Dendritic cell treated with granulocyte-macrophage colony-stimulating factor and Interleukin-4, amounts not matched to agents 40 ng/mL and 50 ng/mL, for 4 days (primary cell): ENCODE measurements at regions of chr2 and their contacts with region 1.

Region 1: DNA sequence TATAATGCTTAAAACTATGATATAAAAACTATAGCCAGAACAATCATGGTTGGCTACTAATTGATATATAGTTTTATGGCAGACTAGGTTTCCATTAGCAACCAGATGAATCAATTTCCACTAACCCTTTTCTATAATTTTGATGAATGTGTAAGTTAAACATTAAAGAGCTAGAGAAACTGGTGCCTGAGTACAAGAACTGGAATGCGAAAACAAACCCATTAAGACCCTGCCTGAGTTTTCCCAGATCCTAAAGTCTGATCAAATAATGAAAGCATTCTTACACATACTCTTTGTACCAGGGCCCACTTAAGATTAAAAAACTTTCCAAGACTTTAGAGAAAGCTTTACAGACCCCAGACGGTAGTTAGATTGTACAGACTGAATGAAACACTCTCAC is 21.3 kb downstream of the MRPL19 start:
- H3K4me3 Mint-ChIP-seq: no peak overlapping the region
- H3K27ac Mint-ChIP-seq: no peak overlapping the region
- H3K4me1 Mint-ChIP-seq: no peaks in the 10 kb centered on the region
- H3K27me3 Mint-ChIP-seq: no peaks in the 10 kb centered on the region

Region 2: DNA sequence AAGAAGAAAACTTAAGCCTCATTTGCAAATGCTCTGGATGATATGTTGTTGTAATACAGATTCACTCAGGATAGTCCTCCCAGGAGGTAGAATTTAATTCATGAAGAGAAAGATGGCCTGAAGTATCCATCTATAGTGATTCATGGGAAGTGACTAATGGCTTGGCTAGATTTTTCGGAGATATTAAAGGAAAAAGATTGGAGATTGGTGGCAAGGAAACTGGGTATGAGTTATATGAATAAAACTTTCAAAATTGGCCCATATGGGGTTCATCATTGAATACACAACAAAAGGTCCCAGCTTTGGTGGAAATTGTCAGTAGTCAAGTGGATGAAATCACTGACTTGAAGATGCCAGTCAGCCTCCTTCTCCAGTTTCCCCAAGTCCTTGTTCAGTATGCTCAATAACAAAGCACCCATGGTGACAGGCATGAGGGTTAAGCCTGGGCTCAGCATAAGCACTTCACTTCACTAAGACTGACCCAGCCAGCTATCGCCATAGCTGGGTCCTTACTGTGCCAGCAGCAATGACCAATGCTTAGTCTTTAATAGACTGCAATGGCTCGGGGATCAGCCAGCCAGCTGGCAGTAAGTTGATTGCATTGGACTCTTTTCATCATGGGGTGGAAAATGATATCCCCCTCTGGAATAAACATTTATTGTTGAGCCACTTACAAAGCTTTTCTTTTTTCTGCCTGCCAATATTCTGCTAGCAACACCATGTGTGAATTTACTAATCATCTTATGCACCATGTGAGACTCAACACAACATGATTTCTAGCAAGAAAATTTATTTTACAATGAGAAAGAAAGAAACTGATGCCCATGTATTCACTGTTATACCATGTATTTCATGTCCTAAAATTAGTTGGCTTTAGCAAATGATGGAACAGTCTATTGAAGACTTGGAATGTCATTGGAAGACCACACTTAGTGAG is 292.0 kb before region 1 on chr2:
- intact Hi-C with region 1: no loop called
- H3K4me3 Mint-ChIP-seq: no peak overlapping the region
- H3K27ac Mint-ChIP-seq: no peak overlapping the region
- H3K4me1 Mint-ChIP-seq: no peaks in the 10 kb centered on the region
- H3K27me3 Mint-ChIP-seq: no peaks in the 10 kb centered on the region

Region 3: GRCh38 chr2:75654012-75654411 is 13.9 kb before region 1 on chr2:
- intact Hi-C with region 1: loop called (anchors 2 kb)
- H3K4me3 Mint-ChIP-seq: no peak overlapping the region
- H3K27ac Mint-ChIP-seq: no peak overlapping the region
- H3K4me1 Mint-ChIP-seq: no peaks in the 10 kb centered on the region
- H3K27me3 Mint-ChIP-seq: no peaks in the 10 kb centered on the region